ENCODE measurements at regions of chr6 and their contacts with region 1.

Region 1: DNA sequence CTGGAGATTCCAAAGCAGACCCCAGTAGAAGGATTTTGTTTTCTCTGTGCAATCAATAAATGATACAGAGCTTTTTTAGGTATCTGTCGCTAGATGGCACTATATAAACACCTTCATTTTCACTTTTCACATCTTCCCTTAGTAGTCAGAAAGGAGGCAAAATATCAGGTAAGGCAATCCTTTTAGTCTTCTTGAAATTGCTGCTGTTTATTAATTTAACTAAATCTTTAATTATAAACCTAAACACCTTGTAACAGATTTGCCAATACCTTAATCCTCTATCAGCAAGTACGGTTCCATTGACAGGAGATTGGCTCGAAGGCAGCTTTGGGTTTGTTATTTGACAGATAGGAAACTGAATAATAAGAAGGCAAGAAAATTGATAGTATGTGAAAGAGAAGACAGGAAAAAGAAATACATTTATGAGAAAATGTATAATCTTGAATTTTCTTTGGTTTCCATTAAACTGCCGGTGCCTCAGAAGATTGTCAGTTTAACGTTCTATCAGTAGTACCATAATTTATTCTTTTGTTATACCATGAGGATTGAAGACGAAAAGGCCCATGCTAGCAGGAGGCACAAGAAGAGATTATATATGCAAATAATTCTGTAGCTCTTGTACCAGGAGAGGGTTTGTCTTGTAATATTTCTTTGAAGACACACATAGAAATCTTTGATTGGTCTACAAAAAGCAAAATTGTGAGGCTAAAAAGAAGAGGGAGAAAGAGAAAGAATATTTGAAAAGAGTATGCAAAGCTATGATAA is 23.5 kb upstream of the IBTK start:
- DNase-seq: peak; percentile 75
- H3K4me3 ChIP-seq: no peak overlapping the region
- H3K27ac ChIP-seq: no peak overlapping the region
- H3K4me1 ChIP-seq: peaks cover 49% of the 10 kb centered on the region
- H3K27me3 ChIP-seq: no peaks in the 10 kb centered on the region
- CTCF ChIP-seq: peak; percentile 75

Region 2: DNA sequence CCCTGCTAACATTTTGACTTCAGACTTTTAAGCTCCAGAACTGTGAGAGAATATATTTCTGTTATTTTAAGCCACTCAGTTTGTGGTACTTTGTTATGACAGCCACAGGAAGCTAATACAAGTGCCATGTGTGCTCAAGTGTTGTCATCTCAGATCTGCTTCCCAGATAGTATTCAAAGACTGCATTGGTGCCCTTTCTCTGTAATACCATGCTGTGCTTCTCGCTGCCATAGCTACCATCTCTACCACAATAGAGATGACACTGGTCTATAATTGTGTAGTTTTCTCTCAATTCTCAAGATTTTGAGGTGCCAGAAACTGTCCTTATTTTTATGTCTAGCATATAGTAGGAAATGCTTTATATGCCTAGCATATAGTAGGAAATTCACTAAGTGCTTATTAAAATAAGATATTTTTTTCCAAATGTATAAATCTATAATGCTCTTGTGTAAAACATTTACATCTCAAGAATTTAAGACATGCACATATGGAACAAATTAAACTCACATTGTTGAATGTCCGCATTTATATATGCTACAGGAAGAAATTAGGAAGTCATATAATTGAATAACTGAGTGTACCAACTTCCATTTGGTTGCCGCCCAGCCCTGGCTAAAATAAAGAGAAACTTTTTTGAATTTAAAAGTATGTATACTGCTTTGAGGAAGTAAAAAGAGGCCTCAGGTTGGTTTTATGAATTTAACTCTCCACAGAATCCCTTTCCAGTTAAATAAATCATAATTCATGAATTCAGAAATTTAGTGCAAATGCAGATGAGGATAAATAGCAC is 170.2 kb after region 1 on chr6:
- CTCF ChIA-PET with region 1: no interaction called
- POLR2A ChIA-PET with region 1: no interaction called
- intact Hi-C with region 1: loop called (anchors 5 kb)
- DNase-seq: peak; percentile 94
- H3K4me3 ChIP-seq: peak overlapping the region; percentile 9
- H3K27ac ChIP-seq: peak overlapping the region; percentile 78
- H3K4me1 ChIP-seq: peaks cover 30% of the 10 kb centered on the region
- H3K27me3 ChIP-seq: no peaks in the 10 kb centered on the region
- CTCF ChIP-seq: no peak

Region 3: GRCh38 chr6:82525775-82526537 is 254.9 kb after region 1 on chr6:
- CTCF ChIA-PET with region 1: no interaction called
- POLR2A ChIA-PET with region 1: no interaction called
- intact Hi-C with region 1: no loop called
- DNase-seq: peak; percentile 90
- H3K4me3 ChIP-seq: no peak overlapping the region
- H3K27ac ChIP-seq: no peak overlapping the region
- H3K4me1 ChIP-seq: peaks cover 14% of the 10 kb centered on the region
- H3K27me3 ChIP-seq: peaks cover 20% of the 10 kb centered on the region
- CTCF ChIP-seq: no peak

Region 4: DNA sequence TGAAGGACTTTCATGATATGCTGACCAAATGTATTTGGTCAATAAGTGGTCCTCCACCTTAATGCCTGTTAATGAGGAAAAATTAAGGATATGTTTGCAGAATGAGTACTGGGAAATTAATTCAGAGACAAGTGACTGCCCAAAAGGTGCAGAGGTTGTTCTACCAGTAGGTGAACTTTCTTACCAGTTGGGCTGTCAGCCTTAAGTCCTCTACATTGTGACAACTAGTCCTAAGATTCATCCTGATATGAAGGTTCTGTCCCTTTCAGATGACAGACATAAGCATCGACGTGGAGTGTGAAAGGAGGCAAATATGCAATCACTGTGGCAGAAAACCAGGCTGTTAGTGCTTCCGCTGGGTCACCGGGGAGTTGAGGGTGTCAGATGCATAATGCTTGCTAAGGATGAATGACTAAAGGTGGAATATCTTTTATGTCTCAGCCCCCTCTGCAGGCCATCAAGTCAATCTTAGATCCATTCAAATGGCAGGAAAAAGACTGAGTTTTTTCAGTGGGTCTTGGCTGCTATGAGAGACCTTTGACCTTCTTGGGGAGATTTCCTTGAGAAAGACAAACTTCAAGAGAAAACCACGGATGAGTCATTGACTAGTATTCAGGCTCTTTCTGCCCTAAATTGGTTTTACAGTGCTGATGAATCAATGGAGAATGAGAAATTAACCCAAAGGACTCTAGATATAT is 318.6 kb after region 1 on chr6:
- CTCF ChIA-PET with region 1: interaction called, 4 read pairs
- POLR2A ChIA-PET with region 1: no interaction called
- intact Hi-C with region 1: loop called (anchors 5 kb)
- DNase-seq: peak; percentile 74
- H3K4me3 ChIP-seq: no peak overlapping the region
- H3K27ac ChIP-seq: no peak overlapping the region
- H3K4me1 ChIP-seq: no peaks in the 10 kb centered on the region
- H3K27me3 ChIP-seq: no peaks in the 10 kb centered on the region
- CTCF ChIP-seq: peak; percentile 51; the same call in 1 of the 2 replicates

Region 5: DNA sequence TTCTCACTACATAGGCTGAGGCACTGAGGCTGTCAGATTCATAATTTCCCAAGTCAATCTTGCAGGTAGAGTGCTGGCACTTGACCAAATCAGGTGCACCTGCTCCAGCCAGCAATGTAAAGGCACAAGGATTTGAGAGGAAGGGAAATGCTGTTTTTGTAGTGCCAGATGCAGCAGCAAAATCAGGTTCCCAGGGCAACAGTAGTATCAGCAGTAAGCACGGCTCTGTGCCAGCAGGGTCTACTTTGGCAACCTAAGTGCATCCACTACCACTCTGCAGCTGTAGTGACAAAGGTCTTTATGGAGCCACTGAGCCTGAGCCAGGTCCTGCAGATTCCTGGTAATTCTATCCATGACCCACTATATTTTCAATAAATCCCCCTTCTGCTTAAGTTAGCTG is 422.0 kb after region 1 on chr6:
- CTCF ChIA-PET with region 1: interaction called, 7 read pairs
- POLR2A ChIA-PET with region 1: no interaction called
- intact Hi-C with region 1: loop called (anchors 1 kb)
- DNase-seq: no peak
- H3K4me3 ChIP-seq: no peak overlapping the region
- H3K27ac ChIP-seq: no peak overlapping the region
- H3K4me1 ChIP-seq: peaks cover 36% of the 10 kb centered on the region
- H3K27me3 ChIP-seq: no peaks in the 10 kb centered on the region
- CTCF ChIP-seq: no peak

Measured in A673 (cell line).